Breast epithelium (tissue), 4 donors: ENCODE measurements at regions of chr5 and their contacts with region 1.

Region 1: DNA sequence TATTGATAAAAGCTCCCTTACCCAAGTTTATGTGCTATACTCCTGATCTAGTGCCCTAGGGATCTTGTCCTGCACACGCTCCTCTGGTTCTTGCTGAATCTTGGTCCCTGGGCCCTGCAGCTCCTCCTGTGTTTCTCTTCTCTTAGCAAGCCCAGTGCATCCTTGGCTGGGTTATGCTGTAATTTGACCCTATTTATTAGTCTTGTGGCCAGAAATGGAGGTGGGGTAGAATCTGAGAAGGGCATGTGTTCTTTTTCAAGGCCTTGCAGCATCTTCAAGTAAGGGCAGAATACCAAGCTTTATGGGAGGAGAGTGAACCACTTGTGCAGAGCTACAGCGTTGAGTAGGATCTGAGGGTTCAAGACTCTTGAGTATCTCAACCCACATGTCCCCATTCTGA is 366.8 kb downstream of the FAM170A start:
- DNase-seq: no peak
- H3K4me3 ChIP-seq: no peak overlapping the region
- H3K27ac ChIP-seq: no peak overlapping the region
- H3K4me1 ChIP-seq: no peaks in the 10 kb centered on the region
- H3K27me3 ChIP-seq: no peaks in the 10 kb centered on the region
- CTCF ChIP-seq: no peak
- POLR2A ChIP-seq: no peak

Region 2: GRCh38 chr5:119966028-119966427 is 30.1 kb before region 1 on chr5:
- intact Hi-C with region 1: no loop called
- DNase-seq: no peak
- H3K4me3 ChIP-seq: no peak overlapping the region
- H3K27ac ChIP-seq: no peak overlapping the region
- H3K4me1 ChIP-seq: no peaks in the 10 kb centered on the region
- H3K27me3 ChIP-seq: no peaks in the 10 kb centered on the region
- CTCF ChIP-seq: no peak
- POLR2A ChIP-seq: no peak

Region 3: DNA sequence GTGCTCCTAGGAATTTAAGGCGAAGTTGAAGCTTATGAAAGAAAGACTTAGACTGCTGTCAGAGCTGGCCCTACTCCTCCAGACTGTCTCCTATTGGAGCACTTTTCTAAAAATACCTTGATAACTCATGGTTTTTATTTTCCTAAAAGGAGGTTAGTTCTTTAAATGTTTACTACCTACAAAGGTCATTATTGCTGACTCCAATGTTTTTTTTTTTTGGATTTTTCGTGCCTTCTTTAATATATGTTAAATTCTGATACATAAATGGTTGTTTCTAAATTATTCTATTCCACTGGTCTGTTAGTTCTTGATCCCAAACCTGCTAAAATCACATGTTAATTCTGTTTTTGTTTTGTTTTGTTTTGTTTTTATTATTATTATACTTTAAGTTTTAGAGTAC is 1627.9 kb after region 1 on chr5:
- intact Hi-C with region 1: loop called (anchors 10 kb)
- DNase-seq: no peak
- H3K4me3 ChIP-seq: no peak overlapping the region
- H3K27ac ChIP-seq: no peak overlapping the region
- H3K4me1 ChIP-seq: no peaks in the 10 kb centered on the region
- H3K27me3 ChIP-seq: no peaks in the 10 kb centered on the region
- CTCF ChIP-seq: no peak
- POLR2A ChIP-seq: no peak